Activated naive CD4-positive, alpha-beta T cell treated with anti-CD3 and anti-CD28 coated beads for 36 hours (primary cell): ENCODE measurements at regions of chr5 and their contacts with region 1.

Region 1: GRCh38 chr5:112146323-112147226 is 272.5 kb downstream of the EPB41L4A start:
- DNase-seq: peak; percentile 81
- H3K4me3 Mint-ChIP-seq: no peak overlapping the region
- H3K27ac Mint-ChIP-seq: no peak overlapping the region
- H3K4me1 Mint-ChIP-seq: no peaks in the 10 kb centered on the region
- H3K27me3 Mint-ChIP-seq: peaks cover 3% of the 10 kb centered on the region

Region 2: DNA sequence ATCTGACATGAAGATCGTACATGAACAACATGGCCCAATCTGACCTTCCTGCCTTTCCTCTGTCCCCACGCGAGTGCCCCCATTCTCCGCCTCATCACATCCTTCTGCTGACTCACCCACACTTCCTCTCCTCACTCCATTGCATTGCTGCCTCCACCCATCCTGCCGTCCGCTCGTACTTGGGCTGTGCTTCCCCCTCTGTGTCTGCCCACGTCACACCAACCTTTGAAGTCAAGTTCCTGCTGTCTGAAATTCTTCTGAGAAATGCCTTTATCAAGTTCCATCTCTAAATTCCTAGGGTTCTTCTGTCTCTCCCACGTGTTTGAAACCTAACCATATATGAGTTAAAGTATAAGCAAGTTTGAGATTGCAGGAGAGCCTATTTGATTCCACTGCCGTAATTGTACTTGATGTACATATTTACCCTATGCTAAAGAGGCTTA is 616.3 kb before region 1 on chr5:
- CTCF ChIA-PET with region 1: interaction called, 6 read pairs
- intact Hi-C with region 1: loop called (anchors 1 kb)
- DNase-seq: peak; percentile 92
- H3K4me3 Mint-ChIP-seq: peak overlapping the region; percentile 62
- H3K27ac Mint-ChIP-seq: peak overlapping the region; percentile 83
- H3K4me1 Mint-ChIP-seq: peaks cover 16% of the 10 kb centered on the region
- H3K27me3 Mint-ChIP-seq: no peaks in the 10 kb centered on the region

Region 3: GRCh38 chr5:111685971-111686370 is 460.6 kb before region 1 on chr5:
- CTCF ChIA-PET with region 1: interaction called, 4 read pairs
- intact Hi-C with region 1: loop called (anchors 1 kb)
- DNase-seq: no peak
- H3K4me3 Mint-ChIP-seq: no peak overlapping the region
- H3K27ac Mint-ChIP-seq: no peak overlapping the region
- H3K4me1 Mint-ChIP-seq: no peaks in the 10 kb centered on the region
- H3K27me3 Mint-ChIP-seq: no peaks in the 10 kb centered on the region

Region 4: GRCh38 chr5:111704452-111705085 is 442.0 kb before region 1 on chr5:
- CTCF ChIA-PET with region 1: no interaction called
- intact Hi-C with region 1: loop called (anchors 5 kb)
- DNase-seq: no peak
- H3K4me3 Mint-ChIP-seq: no peak overlapping the region
- H3K27ac Mint-ChIP-seq: no peak overlapping the region
- H3K4me1 Mint-ChIP-seq: peaks cover 5% of the 10 kb centered on the region
- H3K27me3 Mint-ChIP-seq: peaks cover 1% of the 10 kb centered on the region

Region 5: GRCh38 chr5:111853748-111854147 is 292.8 kb before region 1 on chr5:
- CTCF ChIA-PET with region 1: no interaction called
- intact Hi-C with region 1: loop called (anchors 10 kb)
- DNase-seq: no peak
- H3K4me3 Mint-ChIP-seq: no peak overlapping the region
- H3K27ac Mint-ChIP-seq: no peak overlapping the region
- H3K4me1 Mint-ChIP-seq: peaks cover 1% of the 10 kb centered on the region
- H3K27me3 Mint-ChIP-seq: peaks cover 8% of the 10 kb centered on the region